ENCODE measurements at regions of chr2 and their contacts with region 1.

Region 1: DNA sequence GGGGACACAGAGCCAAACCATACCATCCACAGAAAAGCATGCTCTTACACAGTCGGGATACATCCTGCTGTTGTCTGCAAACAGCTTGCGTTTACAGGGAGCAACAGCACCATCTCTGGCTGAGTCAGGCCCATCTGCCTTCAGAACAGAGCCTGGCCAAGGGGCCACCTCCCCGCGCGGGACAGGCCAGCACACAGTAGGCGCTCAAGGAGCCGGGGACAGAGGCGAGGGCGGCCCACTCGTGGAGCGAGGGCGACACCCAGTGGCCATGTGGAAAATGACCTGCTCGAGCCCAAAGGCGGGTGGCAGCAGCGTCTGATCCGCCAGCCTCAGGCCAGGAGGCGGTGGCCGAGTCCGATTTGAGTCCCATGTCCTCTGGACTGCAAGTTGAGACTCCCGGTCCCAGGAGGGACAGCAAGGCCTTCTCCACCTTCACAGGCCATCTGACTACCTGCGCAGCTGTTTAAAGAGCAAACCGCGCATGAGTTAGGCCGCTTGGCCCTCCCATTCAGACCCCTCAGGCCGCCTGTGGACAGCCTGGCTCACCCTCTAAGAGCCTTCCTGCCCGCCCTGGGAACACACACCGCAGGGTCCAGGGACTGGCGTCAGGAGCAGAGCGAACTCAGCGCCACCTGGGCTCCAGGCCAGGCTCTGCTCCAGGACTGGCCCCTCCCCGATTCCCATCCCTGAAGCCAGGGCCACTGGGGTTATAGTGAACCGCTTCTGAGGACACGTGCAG is 38.3 kb downstream of the TTC32 start:
- DNase-seq: peak; percentile 70 to 72
- ATAC-seq: peak; percentile 87 to 93
- H3K4me3 ChIP-seq: no peak overlapping the region
- H3K27ac ChIP-seq: peak overlapping the region; percentile 69 to 77
- H3K4me1 ChIP-seq: peaks cover 17% of the 10 kb centered on the region
- CTCF ChIP-seq: peak; percentile 99
- EP300 ChIP-seq: no peak
- POLR2A ChIP-seq: no peak
- RAD21 ChIP-seq: peak; percentile 99 to 100

Region 2: DNA sequence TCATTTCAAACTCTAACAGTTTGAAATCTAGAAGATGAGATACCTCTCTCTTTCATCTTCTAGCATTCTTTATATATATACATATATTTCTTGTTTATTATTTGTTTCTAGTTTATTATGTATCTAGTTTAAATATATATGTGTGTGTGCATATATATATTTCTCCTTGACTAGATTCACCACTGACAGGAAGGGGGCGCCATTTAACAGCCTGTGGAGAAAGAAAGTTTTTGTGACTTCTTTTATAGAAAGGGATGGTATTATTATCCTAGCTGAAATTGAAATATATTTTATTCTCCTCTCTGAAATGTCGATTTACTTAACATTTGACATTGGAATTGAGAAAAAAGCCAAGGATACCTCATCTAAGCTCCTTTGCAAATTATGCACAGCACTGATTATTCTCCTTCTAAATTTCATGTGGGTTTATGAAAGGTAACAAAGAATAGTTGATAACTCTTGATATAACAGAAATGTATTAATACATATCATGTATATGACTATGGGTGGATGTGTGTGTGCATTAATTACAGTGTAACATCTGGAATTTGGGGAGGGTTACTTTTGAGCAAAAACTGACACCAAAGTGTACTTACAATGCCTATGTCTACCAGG is 1113.5 kb before region 1 on chr2:
- CTCF ChIA-PET with region 1: interaction called, 32 read pairs
- POLR2A ChIA-PET with region 1: no interaction called
- DNase-seq: peak; percentile 28 to 68
- ATAC-seq: peak; percentile 40 to 77; a peak in 3 of 6 replicates
- H3K4me3 ChIP-seq: no peak overlapping the region
- H3K27ac ChIP-seq: peak overlapping the region in 1 of 2 experiments; percentile 51; a peak in 1 of 6 replicates
- H3K4me1 ChIP-seq: peaks cover 22% of the 10 kb centered on the region
- CTCF ChIP-seq: peak; percentile 97
- EP300 ChIP-seq: no peak
- POLR2A ChIP-seq: no peak
- RAD21 ChIP-seq: peak; percentile 97

Region 3: DNA sequence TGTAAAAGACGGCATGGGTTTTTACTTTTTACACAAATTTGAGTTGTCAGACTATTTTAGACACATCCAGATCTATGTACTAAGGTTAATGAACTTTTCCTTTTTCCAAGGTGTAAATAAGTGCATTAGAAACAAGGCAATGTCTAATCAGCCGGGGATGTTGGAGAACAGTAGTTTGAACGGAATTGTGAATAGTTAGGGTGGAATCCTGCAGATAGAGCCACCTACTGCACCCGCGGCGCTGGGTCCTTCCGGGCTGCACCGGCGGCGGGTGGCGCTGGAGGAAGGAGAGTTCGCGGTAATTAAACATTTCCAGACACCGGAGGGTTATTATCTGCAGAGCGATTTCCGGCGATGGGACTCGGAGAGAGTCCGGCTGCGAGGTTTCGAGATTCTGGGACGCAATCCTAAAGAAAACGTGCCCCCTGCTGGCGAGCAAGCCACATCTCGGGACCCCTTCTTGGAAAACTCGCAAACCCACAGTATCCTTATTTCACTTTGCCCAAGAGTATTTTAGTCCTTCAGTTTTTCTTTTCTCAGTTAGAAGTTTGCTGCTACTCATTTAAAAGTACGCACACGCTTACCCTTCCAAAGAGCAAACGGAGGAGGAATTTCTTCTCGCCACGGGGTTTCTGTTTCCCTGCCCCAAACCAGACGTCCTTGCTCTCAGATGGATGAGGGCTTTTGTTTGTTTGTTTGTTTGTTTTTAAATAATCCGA is 500.6 kb before region 1 on chr2:
- CTCF ChIA-PET with region 1: interaction called, 61 read pairs
- POLR2A ChIA-PET with region 1: no interaction called
- DNase-seq: peak; percentile 87 to 89
- ATAC-seq: peak; percentile 64 to 81
- H3K4me3 ChIP-seq: peak overlapping the region; percentile 67
- H3K27ac ChIP-seq: peak overlapping the region; percentile 73 to 76
- H3K4me1 ChIP-seq: peaks cover 9% of the 10 kb centered on the region
- CTCF ChIP-seq: peak; percentile 97
- EP300 ChIP-seq: no peak
- POLR2A ChIP-seq: no peak
- RAD21 ChIP-seq: peak; percentile 94 to 99

Region 4: GRCh38 chr2:19673213-19673791 is 190.2 kb before region 1 on chr2:
- CTCF ChIA-PET with region 1: no interaction called
- POLR2A ChIA-PET with region 1: no interaction called
- DNase-seq: peak; percentile 46 to 51
- ATAC-seq: peak; percentile 54 to 71; a peak in 5 of 6 replicates
- H3K4me3 ChIP-seq: no peak overlapping the region
- H3K27ac ChIP-seq: peak overlapping the region in 1 of 2 experiments; percentile 58; a peak in 4 of 6 replicates
- H3K4me1 ChIP-seq: peaks cover 34% of the 10 kb centered on the region
- CTCF ChIP-seq: no peak
- EP300 ChIP-seq: no peak
- POLR2A ChIP-seq: no peak
- RAD21 ChIP-seq: no peak

Region 5: GRCh38 chr2:19846030-19846429 is 17.4 kb before region 1 on chr2:
- CTCF ChIA-PET with region 1: interaction called, 11 read pairs
- POLR2A ChIA-PET with region 1: no interaction called
- DNase-seq: peak in 1 of 2 experiments; percentile 38
- ATAC-seq: peak in 1 of 2 experiments; percentile 14; a peak in 1 of 6 replicates
- H3K4me3 ChIP-seq: no peak overlapping the region
- H3K27ac ChIP-seq: no peak overlapping the region
- H3K4me1 ChIP-seq: no peaks in the 10 kb centered on the region
- CTCF ChIP-seq: no peak
- EP300 ChIP-seq: no peak
- POLR2A ChIP-seq: no peak
- RAD21 ChIP-seq: no peak

Region 6: GRCh38 chr2:19876751-19877150 is 13.3 kb after region 1 on chr2:
- CTCF ChIA-PET with region 1: interaction called, 53 read pairs
- POLR2A ChIA-PET with region 1: no interaction called
- DNase-seq: no peak
- ATAC-seq: no peak
- H3K4me3 ChIP-seq: no peak overlapping the region
- H3K27ac ChIP-seq: no peak overlapping the region
- H3K4me1 ChIP-seq: no peaks in the 10 kb centered on the region
- CTCF ChIP-seq: no peak
- EP300 ChIP-seq: no peak
- POLR2A ChIP-seq: no peak
- RAD21 ChIP-seq: no peak